MCF 10A (cell line): ENCODE measurements at regions of chr18 and their contacts with region 1.

Region 1: GRCh38 chr18:62714671-62715435 is 488 bp upstream of the PHLPP1 start:
- DNase-seq: peak; percentile 99
- H3K4me3 Mint-ChIP-seq: peak overlapping the region; percentile 76
- H3K27ac Mint-ChIP-seq: peak overlapping the region; percentile 98
- H3K4me1 Mint-ChIP-seq: peaks cover 20% of the 10 kb centered on the region
- H3K27me3 Mint-ChIP-seq: no peaks in the 10 kb centered on the region
- CTCF ChIP-seq: peak; percentile 61

Region 2: DNA sequence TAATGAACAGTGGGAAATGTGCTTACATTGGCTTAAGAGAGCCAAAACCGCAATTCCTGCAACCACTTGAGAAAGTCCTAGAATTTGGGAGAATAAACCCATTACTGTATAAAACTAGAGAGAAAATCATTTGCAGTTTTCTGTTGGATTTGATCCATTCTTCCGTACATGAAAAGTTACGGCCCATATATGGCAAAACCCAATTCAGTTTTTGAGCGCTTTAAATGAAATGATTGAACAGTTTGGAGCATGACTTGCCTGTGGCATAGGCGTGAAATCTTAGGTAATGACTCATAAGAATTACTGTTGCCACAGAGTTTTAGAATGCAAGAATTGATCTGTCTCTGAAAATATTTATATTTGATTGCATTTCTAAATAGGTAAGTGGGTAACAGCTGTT is 52.5 kb after region 1 on chr18:
- CTCF ChIA-PET with region 1: interaction called, 3 read pairs
- POLR2A ChIA-PET with region 1: interaction called, 316 read pairs
- intact Hi-C with region 1: no loop called
- DNase-seq: peak; percentile 63
- H3K4me3 Mint-ChIP-seq: peak overlapping the region; percentile 64
- H3K27ac Mint-ChIP-seq: peak overlapping the region; percentile 94
- H3K4me1 Mint-ChIP-seq: peaks cover 57% of the 10 kb centered on the region
- H3K27me3 Mint-ChIP-seq: no peaks in the 10 kb centered on the region
- CTCF ChIP-seq: no peak

Region 3: DNA sequence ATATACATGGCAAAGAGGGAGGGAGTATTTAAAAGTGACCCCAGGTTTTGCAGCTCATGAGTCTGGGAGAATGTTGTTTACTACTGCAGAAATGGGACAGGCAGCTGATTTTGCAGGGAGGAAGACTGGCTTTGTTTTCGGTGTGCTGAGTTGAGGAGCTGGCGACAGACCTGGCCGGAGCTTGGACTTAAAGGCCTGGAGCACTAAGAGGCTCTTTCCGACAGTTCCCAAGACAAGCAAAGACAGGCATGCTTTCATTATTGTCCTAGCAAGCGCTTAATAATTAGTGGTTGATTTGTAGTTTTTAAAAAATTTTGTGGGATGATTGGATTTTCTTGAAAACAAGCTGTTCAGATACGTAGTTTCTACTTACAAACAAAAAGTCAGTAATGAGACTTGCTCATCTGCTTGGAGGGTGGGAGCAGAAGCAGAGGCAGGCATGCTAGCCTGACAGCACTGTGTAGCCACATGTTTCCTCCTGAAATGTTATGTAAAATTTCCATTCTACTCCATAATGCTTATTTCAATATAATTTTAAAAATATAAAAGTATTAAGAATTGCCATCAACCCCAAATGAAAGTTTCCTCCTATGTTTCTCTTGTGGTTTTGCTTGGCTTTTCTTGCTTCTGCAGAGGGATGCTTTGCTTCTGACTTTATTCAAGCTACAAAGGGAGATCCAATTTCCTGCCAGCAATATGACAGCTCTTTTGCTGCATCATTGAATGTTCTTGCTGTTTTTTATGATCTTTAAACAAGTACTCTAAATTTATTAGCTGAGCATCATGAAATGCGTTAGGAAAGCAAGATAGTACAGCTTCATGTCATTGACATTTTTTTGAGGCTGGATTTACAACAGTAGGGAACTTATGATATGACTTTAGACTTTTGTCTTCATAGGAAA is 76.3 kb after region 1 on chr18:
- CTCF ChIA-PET with region 1: interaction called, 3 read pairs
- POLR2A ChIA-PET with region 1: interaction called, 18 read pairs
- intact Hi-C with region 1: no loop called
- DNase-seq: no peak
- H3K4me3 Mint-ChIP-seq: no peak overlapping the region
- H3K27ac Mint-ChIP-seq: no peak overlapping the region
- H3K4me1 Mint-ChIP-seq: peaks cover 24% of the 10 kb centered on the region
- H3K27me3 Mint-ChIP-seq: no peaks in the 10 kb centered on the region
- CTCF ChIP-seq: no peak

Region 4: DNA sequence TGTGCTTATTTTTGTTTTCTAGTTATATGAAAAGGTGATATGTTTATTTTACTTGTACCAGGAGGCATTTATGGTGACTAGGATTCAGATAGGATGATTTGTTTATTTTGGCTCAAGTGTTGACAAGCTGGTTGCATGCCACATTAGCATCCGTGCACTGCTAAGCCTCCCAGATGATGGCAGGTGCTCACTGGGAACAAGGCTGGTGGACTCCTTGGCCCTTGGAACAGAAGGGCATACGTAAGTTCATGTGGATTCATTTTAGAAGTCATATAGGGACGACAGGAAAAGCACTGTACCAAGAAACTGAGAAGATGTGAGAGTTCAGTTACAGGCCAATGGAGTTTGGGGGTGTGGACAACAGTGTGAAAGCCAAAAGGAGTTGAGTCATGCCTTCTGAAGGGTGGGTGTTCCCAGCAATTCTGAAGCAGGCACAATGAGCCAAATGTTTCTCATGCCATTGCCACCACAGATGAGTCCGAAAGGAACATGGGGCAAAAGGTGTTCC is 166.7 kb after region 1 on chr18:
- CTCF ChIA-PET with region 1: no interaction called
- POLR2A ChIA-PET with region 1: interaction called, 5 read pairs
- intact Hi-C with region 1: loop called (anchors 5 kb)
- DNase-seq: peak; percentile 94
- H3K4me3 Mint-ChIP-seq: peak overlapping the region; percentile 36
- H3K27ac Mint-ChIP-seq: peak overlapping the region; percentile 54
- H3K4me1 Mint-ChIP-seq: peaks cover 30% of the 10 kb centered on the region
- H3K27me3 Mint-ChIP-seq: no peaks in the 10 kb centered on the region
- CTCF ChIP-seq: no peak

Region 5: GRCh38 chr18:62982600-62983251 is 267.9 kb after region 1 on chr18:
- CTCF ChIA-PET with region 1: interaction called, 31 read pairs
- POLR2A ChIA-PET with region 1: interaction called, 10 read pairs
- intact Hi-C with region 1: loop called (anchors 1 kb)
- DNase-seq: peak; percentile 71
- H3K4me3 Mint-ChIP-seq: no peak overlapping the region
- H3K27ac Mint-ChIP-seq: no peak overlapping the region
- H3K4me1 Mint-ChIP-seq: peaks cover 6% of the 10 kb centered on the region
- H3K27me3 Mint-ChIP-seq: no peaks in the 10 kb centered on the region
- CTCF ChIP-seq: peak; percentile 73